GM13976 (cell line): ENCODE measurements at regions of chr10 and their contacts with region 1.

Region 1: GRCh38 chr10:95588025-95588424 is 26.9 kb upstream of the SORBS1 start:
- DNase-seq: no peak
- CTCF ChIP-seq: no peak

Region 2: GRCh38 chr10:95133016-95133752 is 454.8 kb before region 1 on chr10:
- in situ Hi-C with region 1: loop called (anchors 25 kb)
- DNase-seq: peak; percentile 49
- CTCF ChIP-seq: peak; percentile 62

Region 3: GRCh38 chr10:96496281-96496925 is 908.4 kb after region 1 on chr10:
- in situ Hi-C with region 1: no loop called
- DNase-seq: no peak
- CTCF ChIP-seq: no peak